HEK293T (cell line): ENCODE measurements at regions of chr17 and their contacts with region 1.

Region 1: GRCh38 chr17:31094600-31095238 is at the start of gene NF1:
- DNase-seq: peak; percentile 93

Region 2: GRCh38 chr17:30981531-30982519 is 112.9 kb before region 1 on chr17:
- CTCF ChIA-PET with region 1: no interaction called
- POLR2A ChIA-PET with region 1: no interaction called
- DNase-seq: no peak

Region 3: DNA sequence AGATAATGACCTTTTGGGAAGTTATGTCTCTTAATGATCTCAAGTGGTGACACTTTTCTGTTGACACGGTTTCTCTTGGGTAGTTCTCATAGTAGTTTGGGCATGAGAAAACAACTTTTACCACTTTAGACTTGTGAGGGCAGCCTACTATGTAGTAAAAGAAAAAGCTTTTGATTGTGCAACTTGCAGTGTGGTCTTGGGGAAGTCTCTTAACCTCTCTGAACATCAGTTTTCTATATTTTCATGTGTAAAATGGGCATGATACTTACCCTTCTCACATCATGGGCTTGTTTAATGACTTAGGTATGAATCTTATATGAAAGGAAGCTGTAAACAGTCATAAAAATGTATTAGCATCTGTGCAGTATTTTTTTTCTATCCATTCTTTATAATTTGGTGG is 11.3 kb after region 1 on chr17:
- CTCF ChIA-PET with region 1: no interaction called
- POLR2A ChIA-PET with region 1: interaction called, 26 read pairs
- DNase-seq: no peak

Region 4: DNA sequence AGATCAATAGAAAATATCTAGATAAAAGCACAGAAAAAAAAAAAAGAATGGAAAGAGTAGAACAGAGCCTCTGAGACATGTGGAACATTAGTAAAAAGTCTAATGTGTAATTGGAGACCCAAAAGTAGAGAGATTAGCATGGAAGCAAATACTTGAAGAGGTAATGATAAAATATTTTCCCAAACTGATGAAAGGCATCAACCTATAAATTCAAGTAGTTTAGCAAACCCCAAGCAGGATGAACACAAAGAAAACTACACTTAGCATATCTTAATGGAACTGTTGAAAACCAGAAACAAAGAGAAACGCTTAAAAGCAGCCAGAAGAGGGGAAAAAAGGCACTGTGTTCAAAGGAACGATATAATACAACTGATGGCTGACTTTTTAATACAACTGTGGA is 16.5 kb after region 1 on chr17:
- CTCF ChIA-PET with region 1: interaction called, 6 read pairs
- POLR2A ChIA-PET with region 1: interaction called, 26 read pairs
- DNase-seq: no peak

Region 5: DNA sequence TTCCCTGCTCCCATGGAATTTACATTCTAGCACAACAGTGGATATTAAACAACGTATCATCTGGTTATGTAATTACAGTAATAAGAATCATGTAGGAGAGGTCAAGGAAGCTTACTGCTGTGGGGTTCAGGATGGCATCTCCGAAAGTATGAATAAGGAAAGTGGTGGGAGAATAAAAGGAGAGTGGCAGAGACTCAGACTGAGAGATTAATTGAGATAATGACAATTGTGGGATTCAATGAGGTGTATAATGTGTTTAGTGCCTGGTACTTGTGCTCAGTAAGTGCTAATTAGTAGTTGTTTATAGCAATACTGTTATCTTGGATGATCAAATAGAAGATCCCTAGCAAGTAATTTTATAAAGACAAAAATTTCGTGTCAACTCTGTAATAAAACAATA is 45.4 kb after region 1 on chr17:
- CTCF ChIA-PET with region 1: no interaction called
- POLR2A ChIA-PET with region 1: interaction called, 11 read pairs
- DNase-seq: no peak

Region 6: GRCh38 chr17:31216053-31216751 is 121.5 kb after region 1 on chr17:
- CTCF ChIA-PET with region 1: no interaction called
- POLR2A ChIA-PET with region 1: interaction called, 15 read pairs
- DNase-seq: peak; percentile 3